ENCODE measurements at regions of chr13 and their contacts with region 1.

Region 1: GRCh38 chr13:98565726-98566565 is 11.0 kb downstream of the STK24 start:
- DNase-seq: peak; percentile 83
- H3K4me3 ChIP-seq: peak overlapping the region in 1 of 8 donors; percentile 24
- H3K27ac ChIP-seq: peak overlapping the region; percentile 72 to 97 (median 85)
- H3K4me1 ChIP-seq: peaks cover 65 to 100% (median 99%) of the 10 kb centered on the region in 6 donors
- H3K27me3 ChIP-seq: no peaks in the 10 kb centered on the region
- CTCF ChIP-seq: peak in 1 of 11 experiments; percentile 7
- POLR2A ChIP-seq: no peak

Region 2: GRCh38 chr13:97921176-97921816 is 644.6 kb before region 1 on chr13:
- intact Hi-C with region 1: no loop called
- DNase-seq: no peak
- H3K4me3 ChIP-seq: no peak overlapping the region
- H3K27ac ChIP-seq: no peak overlapping the region
- H3K4me1 ChIP-seq: peaks cover 0 to 4% (median 0%) of the 10 kb centered on the region in 6 donors
- H3K27me3 ChIP-seq: no peaks in the 10 kb centered on the region
- CTCF ChIP-seq: no peak
- POLR2A ChIP-seq: no peak

Region 3: DNA sequence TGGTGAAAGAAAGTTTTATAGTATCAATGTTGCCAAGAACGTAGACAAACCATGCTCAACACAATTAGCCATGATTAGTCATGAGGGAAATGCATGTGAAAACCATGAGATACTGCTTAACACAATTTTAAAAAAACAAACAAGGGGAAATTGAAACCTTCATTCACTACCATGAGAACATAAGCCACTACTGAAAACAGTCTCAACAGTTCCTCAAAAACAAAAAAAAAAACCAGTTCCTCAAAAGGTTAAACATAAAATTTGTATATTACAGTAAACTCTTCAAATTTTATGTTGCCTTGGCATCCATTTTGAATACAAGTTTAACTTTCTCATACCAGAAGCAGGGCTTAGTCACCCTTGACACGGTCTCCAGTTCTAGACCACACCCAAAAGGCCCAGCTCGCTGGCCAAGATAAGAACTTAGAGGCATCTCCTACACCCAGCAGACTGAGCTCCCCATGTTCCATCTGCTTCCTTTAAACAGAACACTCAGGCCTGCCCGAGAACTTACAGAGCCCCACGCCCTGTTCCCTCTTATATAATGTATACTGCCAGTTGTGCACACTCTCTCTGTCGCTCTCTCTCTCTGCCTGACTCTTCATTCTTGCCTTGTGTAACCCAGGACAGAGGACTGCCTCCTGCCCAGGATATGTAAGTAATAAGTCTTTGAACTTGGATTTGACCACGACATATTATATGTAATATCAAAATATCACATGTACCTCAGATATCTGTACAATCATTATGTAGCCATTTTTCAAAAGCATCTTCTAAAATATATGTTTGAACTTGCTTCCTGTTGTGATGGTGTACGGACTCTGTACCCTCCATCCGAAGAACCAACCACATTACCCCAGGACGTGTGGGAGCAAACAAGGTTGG is 56.4 kb before region 1 on chr13:
- intact Hi-C with region 1: loop called (anchors 10 kb)
- DNase-seq: no peak
- H3K4me3 ChIP-seq: peak overlapping the region in 1 of 8 donors; percentile 14
- H3K27ac ChIP-seq: peak overlapping the region; percentile 58 to 85 (median 78)
- H3K4me1 ChIP-seq: peaks cover 35 to 100% (median 85%) of the 10 kb centered on the region in 6 donors
- H3K27me3 ChIP-seq: no peaks in the 10 kb centered on the region
- CTCF ChIP-seq: no peak
- POLR2A ChIP-seq: no peak

Measured in spleen (tissue), 13 donors.